Posterior vena cava (tissue), 2 donors: ENCODE measurements at regions of chr17 and their contacts with region 1.

Region 1: DNA sequence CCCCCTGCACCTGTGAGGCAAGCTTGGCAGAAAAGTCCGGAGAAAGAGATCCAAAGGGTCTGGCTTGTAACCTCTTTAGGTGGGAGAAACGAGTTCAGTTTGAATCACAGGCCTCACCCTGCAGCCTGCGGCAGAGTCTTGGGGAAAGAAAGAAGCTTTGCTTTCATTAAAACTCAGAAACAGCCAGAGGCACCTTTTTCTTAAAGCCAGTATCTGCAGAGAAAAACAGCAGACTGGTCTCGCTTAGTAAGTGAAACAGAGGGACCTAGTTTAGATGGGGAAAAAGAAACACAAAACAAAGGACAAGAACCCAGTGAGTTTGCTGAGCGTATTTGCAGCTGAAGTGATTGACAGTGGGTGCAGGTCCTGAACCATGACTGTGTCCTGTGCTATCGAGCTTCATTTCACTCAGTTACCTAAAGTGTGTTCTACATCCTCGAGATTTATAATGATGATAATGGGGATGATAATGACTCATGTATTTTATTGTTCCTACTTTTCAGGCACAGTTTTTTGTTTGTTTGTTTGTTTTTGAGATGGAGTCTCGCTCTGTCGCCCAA is 31.8 kb upstream of the WFIKKN2 start:
- DNase-seq: no peak

Region 2: DNA sequence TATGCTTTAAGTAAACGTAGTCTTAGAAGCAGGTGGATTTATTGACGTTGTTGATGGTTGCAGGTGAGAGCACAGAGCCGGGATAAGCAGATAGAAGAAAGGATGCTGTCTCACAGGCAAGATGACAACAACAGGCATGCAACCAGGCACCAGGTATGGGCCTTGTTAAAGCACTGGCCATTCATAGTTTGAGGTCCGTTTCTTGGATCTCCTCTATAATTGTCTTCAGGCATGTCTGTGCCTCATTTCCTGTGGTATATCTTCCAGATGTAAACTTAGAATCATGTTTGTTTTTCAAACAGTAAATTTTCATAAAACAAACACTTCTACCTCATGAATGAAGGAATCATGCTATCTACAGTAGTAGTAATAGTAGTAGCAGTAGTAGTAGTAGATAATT is 994.5 kb before region 1 on chr17:
- intact Hi-C with region 1: no loop called
- DNase-seq: no peak

Region 3: DNA sequence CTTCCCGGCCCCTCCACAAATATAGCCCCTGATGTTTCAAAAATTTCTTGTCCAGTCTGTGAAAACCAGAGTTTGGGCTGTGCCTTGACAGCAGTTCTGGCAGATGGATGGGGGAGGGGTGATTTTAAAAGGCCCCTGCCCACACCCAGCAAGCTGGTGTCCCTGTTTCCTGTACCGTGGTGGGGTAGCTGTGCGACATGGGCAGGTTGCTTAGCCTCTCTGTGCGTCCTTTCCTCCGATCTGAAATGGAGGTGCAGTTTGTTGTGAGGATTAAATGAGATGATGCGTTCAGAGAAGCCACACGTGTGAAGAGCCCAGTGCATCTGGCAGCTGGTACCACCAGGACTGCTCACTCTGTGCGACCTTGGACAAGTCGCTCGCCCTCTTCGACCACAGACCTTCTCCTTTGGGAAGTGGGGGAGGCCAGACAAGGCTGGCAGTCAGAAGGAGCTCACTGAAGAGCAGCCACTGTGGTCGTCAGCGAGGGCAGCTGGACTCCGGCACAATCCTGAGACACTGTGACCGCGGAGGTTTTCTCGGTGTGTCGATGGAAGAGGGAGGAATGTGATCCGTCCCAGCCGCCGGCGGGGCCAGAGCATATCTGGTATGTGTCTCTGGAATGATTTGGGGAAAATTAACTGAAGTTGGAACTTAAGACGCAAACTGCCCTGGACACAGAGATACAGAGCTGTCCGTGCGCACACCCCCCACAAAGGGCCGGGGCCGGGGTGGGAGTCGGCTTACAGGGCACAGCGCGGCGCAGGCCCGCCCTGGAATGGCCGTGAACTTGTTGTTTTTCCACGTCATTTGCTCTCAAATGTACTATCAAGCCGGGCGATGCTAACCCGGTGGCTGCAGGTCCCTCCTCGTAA is 31.1 kb after region 1 on chr17:
- intact Hi-C with region 1: loop called in 1 of 2 experiments (anchors 1 kb)
- DNase-seq: no peak